MCF 10A (cell line): ENCODE measurements at regions of chr10 and their contacts with region 1.

Region 1: GRCh38 chr10:101782811-101783735 is at the start of gene NPM3:
- DNase-seq: peak; percentile 83
- H3K4me3 Mint-ChIP-seq: peak within 1 kb of the TSS; percentile 100
- H3K27ac Mint-ChIP-seq: peak within 1 kb of the TSS; percentile 98
- H3K4me1 Mint-ChIP-seq: peaks cover 28% of the 10 kb centered on the region
- H3K27me3 Mint-ChIP-seq: no peaks in the 10 kb centered on the region
- CTCF ChIP-seq: no peak
- total RNA-seq, gene NPM3: 120 and 163 TPM in 2 replicates

Region 2: DNA sequence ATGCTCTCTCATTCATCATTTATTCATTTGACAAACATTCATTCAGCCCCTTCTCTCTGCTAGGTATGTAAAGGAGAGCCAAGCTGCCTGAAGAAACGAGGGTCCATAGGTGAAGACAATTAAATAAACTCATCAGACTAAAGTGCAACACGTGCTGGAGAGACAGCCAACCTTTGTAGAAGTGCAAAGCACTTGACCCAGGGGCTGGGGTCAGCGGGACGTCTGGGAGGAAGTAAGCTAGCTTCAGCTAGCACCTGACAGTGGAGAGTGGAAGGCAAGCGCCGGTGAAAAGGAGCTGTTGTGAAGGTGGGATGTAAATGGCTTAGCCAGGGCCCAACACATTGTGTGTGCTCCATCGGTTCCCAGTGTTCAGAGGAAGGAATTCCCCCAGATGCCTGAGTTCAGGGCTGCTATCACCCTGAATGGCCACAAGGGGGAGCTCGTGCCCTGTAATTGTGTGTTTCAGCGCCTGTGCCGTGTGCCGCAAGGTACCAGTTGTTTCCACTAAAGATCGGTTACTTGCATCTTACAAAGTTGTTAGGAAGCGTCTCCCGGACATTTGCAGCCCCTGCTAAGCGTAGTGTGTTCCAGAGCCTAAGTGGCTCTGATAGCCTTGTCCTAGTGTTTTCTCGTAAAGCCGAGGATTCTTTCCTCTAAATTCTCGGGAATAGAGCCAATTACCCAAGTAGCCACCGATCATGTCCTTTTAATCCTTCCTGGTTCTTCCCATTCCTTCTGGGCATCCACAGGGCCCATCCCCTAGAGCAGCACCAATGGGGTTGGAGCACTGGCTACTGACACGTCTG is 621.4 kb before region 1 on chr10:
- CTCF ChIA-PET with region 1: interaction called, 14 read pairs
- POLR2A ChIA-PET with region 1: no interaction called
- intact Hi-C with region 1: loop called (anchors 5 kb)
- DNase-seq: peak; percentile 83
- H3K4me3 Mint-ChIP-seq: peak overlapping the region; percentile 63
- H3K27ac Mint-ChIP-seq: no peak overlapping the region
- H3K4me1 Mint-ChIP-seq: peaks cover 19% of the 10 kb centered on the region
- H3K27me3 Mint-ChIP-seq: peaks cover 33% of the 10 kb centered on the region
- CTCF ChIP-seq: peak; percentile 91

Region 3: DNA sequence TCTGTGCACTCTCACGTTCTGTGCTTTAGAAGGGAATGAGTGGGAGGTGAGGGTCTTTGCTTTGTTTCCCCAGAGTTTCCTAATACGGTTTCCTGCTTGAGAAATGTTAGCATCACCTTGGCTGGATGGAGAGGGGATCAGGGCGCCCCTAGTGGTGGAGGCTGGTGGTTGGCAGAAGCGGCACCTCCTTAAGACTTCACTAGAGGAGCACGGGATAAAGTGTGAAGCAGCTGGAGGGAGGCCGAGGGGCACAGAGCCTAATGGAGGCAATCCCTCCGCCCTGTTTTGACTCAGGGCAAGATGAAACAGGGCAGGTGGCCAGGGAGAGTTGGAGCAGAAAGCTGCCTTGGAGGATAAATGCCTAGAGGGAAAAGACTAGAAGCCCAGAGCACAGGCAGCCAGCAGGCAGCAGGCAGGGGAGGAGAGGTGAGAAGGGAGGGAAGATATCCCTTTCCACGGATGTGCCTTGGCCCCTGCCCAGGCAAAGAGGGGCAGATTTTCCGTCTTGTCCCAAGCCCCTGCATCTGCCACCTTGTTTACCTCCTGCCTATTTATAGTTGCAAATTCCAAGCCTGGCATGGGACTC is 485.1 kb before region 1 on chr10:
- CTCF ChIA-PET with region 1: no interaction called
- POLR2A ChIA-PET with region 1: no interaction called
- intact Hi-C with region 1: loop called (anchors 2 kb)
- DNase-seq: peak; percentile 69
- H3K4me3 Mint-ChIP-seq: no peak overlapping the region
- H3K27ac Mint-ChIP-seq: no peak overlapping the region
- H3K4me1 Mint-ChIP-seq: peaks cover 10% of the 10 kb centered on the region
- H3K27me3 Mint-ChIP-seq: peaks cover 65% of the 10 kb centered on the region
- CTCF ChIP-seq: peak; percentile 72

Region 4: GRCh38 chr10:101602761-101603398 is 180.2 kb before region 1 on chr10:
- CTCF ChIA-PET with region 1: interaction called, 31 read pairs
- POLR2A ChIA-PET with region 1: interaction called, 4 read pairs
- intact Hi-C with region 1: loop called (anchors 1 kb)
- DNase-seq: peak; percentile 74
- H3K4me3 Mint-ChIP-seq: no peak overlapping the region
- H3K27ac Mint-ChIP-seq: no peak overlapping the region
- H3K4me1 Mint-ChIP-seq: no peaks in the 10 kb centered on the region
- H3K27me3 Mint-ChIP-seq: no peaks in the 10 kb centered on the region
- CTCF ChIP-seq: peak; percentile 93

Region 5: GRCh38 chr10:101736666-101737065 is 46.4 kb before region 1 on chr10:
- CTCF ChIA-PET with region 1: no interaction called
- POLR2A ChIA-PET with region 1: no interaction called
- intact Hi-C with region 1: no loop called
- DNase-seq: no peak
- H3K4me3 Mint-ChIP-seq: no peak overlapping the region
- H3K27ac Mint-ChIP-seq: no peak overlapping the region
- H3K4me1 Mint-ChIP-seq: no peaks in the 10 kb centered on the region
- H3K27me3 Mint-ChIP-seq: peaks cover 54% of the 10 kb centered on the region
- CTCF ChIP-seq: no peak

Region 6: GRCh38 chr10:101758858-101759257 is 24.2 kb before region 1 on chr10:
- CTCF ChIA-PET with region 1: interaction called, 14 read pairs
- POLR2A ChIA-PET with region 1: no interaction called
- intact Hi-C with region 1: no loop called
- DNase-seq: no peak
- H3K4me3 Mint-ChIP-seq: no peak overlapping the region
- H3K27ac Mint-ChIP-seq: no peak overlapping the region
- H3K4me1 Mint-ChIP-seq: no peaks in the 10 kb centered on the region
- H3K27me3 Mint-ChIP-seq: peaks cover 12% of the 10 kb centered on the region
- CTCF ChIP-seq: no peak

Region 7: GRCh38 chr10:101797403-101798059 is 14.5 kb after region 1 on chr10:
- CTCF ChIA-PET with region 1: interaction called, 16 read pairs
- POLR2A ChIA-PET with region 1: interaction called, 58 read pairs
- intact Hi-C with region 1: no loop called
- DNase-seq: no peak
- H3K4me3 Mint-ChIP-seq: no peak overlapping the region
- H3K27ac Mint-ChIP-seq: no peak overlapping the region
- H3K4me1 Mint-ChIP-seq: no peaks in the 10 kb centered on the region
- H3K27me3 Mint-ChIP-seq: no peaks in the 10 kb centered on the region
- CTCF ChIP-seq: no peak